Endothelial cell of umbilical vein (primary cell): ENCODE measurements at regions of chr6 and their contacts with region 1.

Region 1: DNA sequence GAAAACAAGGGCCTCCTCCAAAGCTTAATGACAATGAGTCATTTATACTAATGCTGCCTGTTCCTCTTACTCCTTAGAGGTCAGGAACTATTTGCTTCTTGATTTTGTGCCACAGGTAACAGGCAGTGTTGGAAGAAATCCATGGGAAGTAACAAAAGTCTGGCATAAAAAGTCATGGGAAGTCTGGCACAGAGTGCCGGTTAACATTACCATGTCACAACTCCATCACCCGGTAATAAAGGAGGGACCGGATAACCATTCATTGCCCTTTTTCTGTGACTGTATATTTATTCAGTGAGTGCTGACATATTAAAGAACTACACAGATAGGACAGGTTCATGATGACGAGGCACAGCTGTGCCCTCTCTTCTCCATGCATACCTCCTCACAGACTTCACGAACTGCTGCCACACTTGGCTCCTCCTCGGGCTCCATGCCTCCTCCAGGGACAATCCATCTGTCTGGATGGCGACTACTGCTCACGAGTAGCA is 50.9 kb downstream of the NUDT3 start:
- DNase-seq: peak; percentile 84
- H3K4me3 ChIP-seq: no peak overlapping the region
- H3K27ac ChIP-seq: peak overlapping the region; percentile 46
- H3K4me1 ChIP-seq: peaks cover 56% of the 10 kb centered on the region
- H3K27me3 ChIP-seq: no peaks in the 10 kb centered on the region
- CTCF ChIP-seq: no peak
- POLR2A ChIP-seq: no peak

Region 2: DNA sequence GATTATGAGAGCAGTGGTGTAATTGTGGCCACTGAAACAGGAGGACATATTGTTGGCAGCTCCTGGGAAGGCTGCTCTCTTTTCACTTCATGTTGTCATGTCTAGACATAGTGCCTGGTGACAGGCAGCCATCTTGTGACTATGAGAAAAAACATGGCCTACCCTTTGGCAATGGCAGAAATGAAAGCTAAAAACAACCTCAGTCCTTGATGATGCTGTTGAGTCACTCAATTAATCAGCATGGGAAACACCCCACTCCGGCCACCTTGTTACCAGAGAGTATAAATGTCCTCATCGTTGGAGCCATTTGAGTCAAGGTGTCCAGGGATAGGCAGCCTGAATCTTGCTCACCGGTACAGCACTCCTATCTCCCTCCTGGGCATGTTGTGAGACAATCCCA is 136.1 kb before region 1 on chr6:
- CTCF ChIA-PET with region 1: no interaction called
- POLR2A ChIA-PET with region 1: no interaction called
- dilution Hi-C with region 1: no loop called
- intact Hi-C with region 1: no loop called
- DNase-seq: no peak
- H3K4me3 ChIP-seq: no peak overlapping the region
- H3K27ac ChIP-seq: no peak overlapping the region
- H3K4me1 ChIP-seq: no peaks in the 10 kb centered on the region
- H3K27me3 ChIP-seq: no peaks in the 10 kb centered on the region
- CTCF ChIP-seq: no peak
- POLR2A ChIP-seq: no peak

Region 3: GRCh38 chr6:34359418-34360158 is 18.1 kb after region 1 on chr6:
- CTCF ChIA-PET with region 1: interaction called, 10 read pairs
- POLR2A ChIA-PET with region 1: no interaction called
- dilution Hi-C with region 1: no loop called
- intact Hi-C with region 1: no loop called
- DNase-seq: no peak
- H3K4me3 ChIP-seq: no peak overlapping the region
- H3K27ac ChIP-seq: no peak overlapping the region
- H3K4me1 ChIP-seq: peaks cover 8% of the 10 kb centered on the region
- H3K27me3 ChIP-seq: no peaks in the 10 kb centered on the region
- CTCF ChIP-seq: no peak
- POLR2A ChIP-seq: no peak

Region 4: GRCh38 chr6:34370361-34370760 is 28.8 kb after region 1 on chr6:
- CTCF ChIA-PET with region 1: no interaction called
- POLR2A ChIA-PET with region 1: no interaction called
- dilution Hi-C with region 1: no loop called
- intact Hi-C with region 1: loop called (anchors 1 kb)
- DNase-seq: peak; percentile 85
- H3K4me3 ChIP-seq: no peak overlapping the region
- H3K27ac ChIP-seq: peak overlapping the region; percentile 39
- H3K4me1 ChIP-seq: peaks cover 23% of the 10 kb centered on the region
- H3K27me3 ChIP-seq: no peaks in the 10 kb centered on the region
- CTCF ChIP-seq: no peak
- POLR2A ChIP-seq: no peak

Region 5: GRCh38 chr6:34526992-34527728 is 185.6 kb after region 1 on chr6:
- CTCF ChIA-PET with region 1: no interaction called
- POLR2A ChIA-PET with region 1: no interaction called
- dilution Hi-C with region 1: no loop called
- intact Hi-C with region 1: no loop called
- DNase-seq: peak; percentile 89
- H3K4me3 ChIP-seq: peak overlapping the region in 2 of 3 experiments; percentile 4 to 42
- H3K27ac ChIP-seq: no peak overlapping the region
- H3K4me1 ChIP-seq: peaks cover 2% of the 10 kb centered on the region
- H3K27me3 ChIP-seq: no peaks in the 10 kb centered on the region
- CTCF ChIP-seq: peak; percentile 56 to 86
- POLR2A ChIP-seq: peak; percentile 42